Stomach (tissue), 19 donors: ENCODE measurements at regions of chr18 and their contacts with region 1.

Region 1: DNA sequence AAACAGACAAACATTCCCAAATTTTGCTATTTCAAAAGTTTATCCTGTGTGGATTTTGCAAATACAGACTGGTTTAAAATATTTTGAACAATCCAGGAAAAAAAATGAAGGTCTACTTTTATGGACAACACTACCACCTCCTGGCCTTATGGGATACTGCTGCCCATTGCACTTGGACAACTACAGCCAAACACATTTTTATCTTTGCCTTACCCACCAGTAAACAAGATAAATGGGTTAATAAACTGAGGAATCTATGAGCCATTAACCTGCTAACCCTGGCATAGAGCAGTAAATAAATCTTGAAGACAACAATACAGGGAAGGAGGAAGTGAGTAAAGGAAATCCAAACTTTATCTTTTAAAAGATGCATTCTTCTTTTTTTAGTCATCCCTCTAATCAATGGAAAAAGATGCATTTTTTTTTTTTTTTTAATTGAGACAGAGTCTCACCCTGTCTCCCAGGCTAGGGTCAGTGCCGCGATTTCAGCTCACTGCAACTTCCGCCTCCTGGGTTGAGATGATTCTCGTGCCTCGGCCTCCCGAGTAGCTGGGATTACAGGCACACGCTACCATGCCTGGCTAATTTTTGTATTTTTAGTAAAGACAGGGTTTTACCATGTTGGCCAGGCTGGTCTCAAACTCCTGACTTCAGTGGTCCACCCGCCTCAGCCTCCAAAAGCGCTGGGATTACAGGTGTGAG is 2.1 kb upstream of the SPIRE1 start:
- DNase-seq: peak; percentile 35 to 83
- H3K4me3 ChIP-seq: no peak overlapping the region
- H3K27ac ChIP-seq: no peak overlapping the region
- H3K4me1 ChIP-seq: peaks cover 10 to 43% (median 23%) of the 10 kb centered on the region in 4 donors
- H3K27me3 ChIP-seq: no peaks in the 10 kb centered on the region
- CTCF ChIP-seq: peak in 6 of 7 experiments; percentile 16 to 91 (median 83)
- EP300 ChIP-seq: no peak
- POLR2A ChIP-seq: no peak

Region 2: GRCh38 chr18:12391618-12392165 is 268.4 kb before region 1 on chr18:
- intact Hi-C with region 1: loop called (anchors 5 kb)
- DNase-seq: peak; percentile 61 to 87
- H3K4me3 ChIP-seq: no peak overlapping the region
- H3K27ac ChIP-seq: no peak overlapping the region
- H3K4me1 ChIP-seq: no peaks in the 10 kb centered on the region
- H3K27me3 ChIP-seq: no peaks in the 10 kb centered on the region
- CTCF ChIP-seq: peak in 6 of 7 experiments; percentile 3 to 87 (median 79)
- EP300 ChIP-seq: no peak
- POLR2A ChIP-seq: no peak